PC-3 (cell line): ENCODE measurements at regions of chr9 and their contacts with region 1.

Region 1: DNA sequence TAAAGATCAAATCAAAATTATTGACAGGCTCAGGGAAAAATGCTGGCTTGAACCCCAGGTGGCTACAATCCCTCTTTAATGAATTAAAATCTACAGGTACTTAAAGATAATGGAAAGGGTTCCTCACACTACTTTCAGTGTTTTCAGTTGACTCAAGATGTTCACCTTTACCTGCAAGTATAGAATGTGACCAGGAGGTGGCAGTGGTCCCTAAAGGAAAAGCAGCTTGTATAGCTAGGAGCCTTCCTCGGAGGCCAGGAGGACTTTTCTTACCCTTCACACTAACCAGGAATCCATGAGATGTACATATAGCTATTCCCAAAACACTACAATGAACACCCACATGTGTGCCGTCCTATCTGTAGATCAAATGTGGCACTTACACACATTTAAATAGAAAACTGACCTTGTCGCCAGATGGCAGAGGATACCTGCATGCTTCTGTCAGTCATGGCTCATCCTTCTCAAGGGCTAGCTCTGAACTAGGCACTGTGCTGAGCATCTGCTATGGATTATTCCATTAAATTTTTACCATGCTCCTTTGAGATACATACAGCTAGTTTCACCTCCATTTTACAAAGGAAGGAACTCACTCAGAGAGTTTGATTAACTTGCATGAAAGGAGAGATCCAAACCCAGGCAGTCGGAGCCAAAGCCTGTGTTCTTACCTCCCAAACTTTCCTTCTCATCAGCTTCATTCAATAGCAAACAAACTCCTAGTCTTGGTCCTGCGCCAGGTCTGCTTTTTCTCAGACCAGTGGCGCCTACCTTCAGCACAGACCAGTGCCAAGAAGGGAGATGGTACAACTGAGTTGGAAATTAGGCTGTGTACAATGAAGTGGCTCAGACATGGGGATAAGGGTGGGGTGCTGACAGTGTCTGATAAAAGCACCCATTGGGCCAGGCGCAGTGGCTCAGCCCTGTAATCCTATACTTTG is 24.5 kb downstream of the C9orf152 start:
- DNase-seq: peak; percentile 80
- ATAC-seq: peak; percentile 66
- H3K4me3 ChIP-seq: no peak overlapping the region
- H3K27ac ChIP-seq: no peak overlapping the region
- H3K4me1 ChIP-seq: peaks cover 20% of the 10 kb centered on the region
- H3K27me3 ChIP-seq: no peaks in the 10 kb centered on the region
- CTCF ChIP-seq: peak; percentile 81

Region 2: GRCh38 chr9:110217656-110218099 is 34.2 kb after region 1 on chr9:
- CTCF ChIA-PET with region 1: interaction called, 15 read pairs
- POLR2A ChIA-PET with region 1: no interaction called
- intact Hi-C with region 1: loop called (anchors 1 kb)
- DNase-seq: peak; percentile 62
- ATAC-seq: no peak
- H3K4me3 ChIP-seq: no peak overlapping the region; the same call in 1 of the 2 replicates
- H3K27ac ChIP-seq: no peak overlapping the region
- H3K4me1 ChIP-seq: no peaks in the 10 kb centered on the region
- H3K27me3 ChIP-seq: no peaks in the 10 kb centered on the region
- CTCF ChIP-seq: peak; percentile 71